Ascending aorta (tissue), 2 donors: ENCODE measurements at regions of chrX and their contacts with region 1.

Region 1: DNA sequence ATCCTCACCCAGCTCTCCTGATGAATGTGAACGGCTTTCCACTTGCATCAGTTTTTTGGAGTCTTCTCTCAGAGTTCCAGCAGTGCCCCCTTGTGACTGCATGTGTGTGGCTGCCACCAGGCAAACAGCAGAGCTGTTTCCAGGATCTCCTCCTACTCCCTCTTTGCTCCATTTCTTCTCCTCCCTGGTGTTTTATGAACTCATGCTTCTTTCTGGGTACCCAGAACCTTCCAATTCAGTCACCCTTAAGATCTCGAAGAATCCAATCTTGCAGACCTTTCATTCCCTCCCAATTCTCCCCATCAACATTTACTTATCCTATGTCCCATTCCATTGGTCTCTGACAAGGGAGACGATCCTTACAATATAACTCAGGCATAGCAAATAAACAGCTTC is 6.8 kb upstream of the TCEANC start:
- DNase-seq: peak in 1 of 2 donors; percentile 81
- H3K4me3 ChIP-seq: no peak overlapping the region
- H3K27ac ChIP-seq: no peak overlapping the region
- H3K4me1 ChIP-seq: no peaks in the 10 kb centered on the region
- H3K27me3 ChIP-seq: no peaks in the 10 kb centered on the region
- CTCF ChIP-seq: peak; percentile 42 to 74 (median 72)

Region 2: GRCh38 chrX:12814420-12814819 is 831.7 kb before region 1 on chrX:
- intact Hi-C with region 1: loop called (anchors 10 kb)
- DNase-seq: no peak
- H3K4me3 ChIP-seq: no peak overlapping the region
- H3K27ac ChIP-seq: no peak overlapping the region
- H3K4me1 ChIP-seq: no peaks in the 10 kb centered on the region
- H3K27me3 ChIP-seq: no peaks in the 10 kb centered on the region
- CTCF ChIP-seq: peak; percentile 18 to 47 (median 33)

Region 3: GRCh38 chrX:12946838-12947544 is 699.2 kb before region 1 on chrX:
- intact Hi-C with region 1: loop called (anchors 5 kb)
- DNase-seq: peak in 1 of 2 donors; percentile 86
- H3K4me3 ChIP-seq: no peak overlapping the region
- H3K27ac ChIP-seq: peak overlapping the region; percentile 6 to 52
- H3K4me1 ChIP-seq: peaks cover 0 to 6% of the 10 kb centered on the region in 2 donors
- H3K27me3 ChIP-seq: no peaks in the 10 kb centered on the region
- CTCF ChIP-seq: peak; percentile 72 to 89 (median 78)

Region 4: GRCh38 chrX:13506574-13506973 is 139.6 kb before region 1 on chrX:
- intact Hi-C with region 1: loop called (anchors 1 kb)
- DNase-seq: no peak
- H3K4me3 ChIP-seq: no peak overlapping the region
- H3K27ac ChIP-seq: no peak overlapping the region
- H3K4me1 ChIP-seq: no peaks in the 10 kb centered on the region
- H3K27me3 ChIP-seq: no peaks in the 10 kb centered on the region
- CTCF ChIP-seq: peak; percentile 58 to 84 (median 82)

Region 5: DNA sequence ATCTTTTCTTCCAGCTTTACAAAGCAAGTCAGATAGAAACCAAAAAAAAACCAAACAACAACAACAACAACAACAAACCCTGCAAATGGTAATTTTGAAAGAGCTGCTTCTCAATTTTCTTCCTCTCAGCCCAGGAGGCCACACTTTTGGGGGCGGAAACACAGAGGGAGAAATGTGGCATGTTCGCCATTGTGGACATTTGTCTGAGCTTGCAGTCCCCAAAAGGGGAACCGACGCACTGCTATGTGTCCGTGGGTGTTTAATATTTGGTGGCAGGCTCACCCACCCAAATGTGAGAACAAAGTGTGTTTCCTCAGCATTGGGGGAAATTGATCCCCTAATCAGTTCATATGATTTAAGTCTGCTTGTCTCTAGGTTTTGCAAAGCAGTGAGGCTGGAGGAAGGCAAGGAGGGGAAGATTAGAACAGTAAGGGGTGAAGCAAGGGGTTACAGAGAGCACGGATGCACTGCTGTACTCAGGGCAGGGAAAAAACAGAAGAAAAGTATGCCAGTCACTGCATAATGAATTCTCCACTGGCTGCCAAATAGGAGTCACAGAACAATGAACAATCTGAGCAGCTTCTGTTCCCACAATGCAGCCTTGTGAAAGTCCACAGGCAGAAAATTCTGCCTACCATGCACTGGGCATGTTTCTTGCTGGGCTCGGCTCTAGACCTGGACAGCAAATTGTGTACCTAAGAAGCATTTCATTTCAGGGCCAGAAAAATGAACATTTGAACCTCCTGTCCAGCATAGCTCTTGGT is 245.4 kb after region 1 on chrX:
- intact Hi-C with region 1: loop called (anchors 5 kb)
- DNase-seq: no peak
- H3K4me3 ChIP-seq: no peak overlapping the region
- H3K27ac ChIP-seq: no peak overlapping the region
- H3K4me1 ChIP-seq: peaks cover 0 to 15% of the 10 kb centered on the region in 2 donors
- H3K27me3 ChIP-seq: no peaks in the 10 kb centered on the region
- CTCF ChIP-seq: no peak

Region 6: GRCh38 chrX:13966071-13966792 is 320.1 kb after region 1 on chrX:
- intact Hi-C with region 1: no loop called
- DNase-seq: no peak
- H3K4me3 ChIP-seq: no peak overlapping the region
- H3K27ac ChIP-seq: no peak overlapping the region
- H3K4me1 ChIP-seq: no peaks in the 10 kb centered on the region
- H3K27me3 ChIP-seq: no peaks in the 10 kb centered on the region
- CTCF ChIP-seq: no peak